H1 (cell line): ENCODE measurements at regions of chr12 and their contacts with region 1.

Region 1: DNA sequence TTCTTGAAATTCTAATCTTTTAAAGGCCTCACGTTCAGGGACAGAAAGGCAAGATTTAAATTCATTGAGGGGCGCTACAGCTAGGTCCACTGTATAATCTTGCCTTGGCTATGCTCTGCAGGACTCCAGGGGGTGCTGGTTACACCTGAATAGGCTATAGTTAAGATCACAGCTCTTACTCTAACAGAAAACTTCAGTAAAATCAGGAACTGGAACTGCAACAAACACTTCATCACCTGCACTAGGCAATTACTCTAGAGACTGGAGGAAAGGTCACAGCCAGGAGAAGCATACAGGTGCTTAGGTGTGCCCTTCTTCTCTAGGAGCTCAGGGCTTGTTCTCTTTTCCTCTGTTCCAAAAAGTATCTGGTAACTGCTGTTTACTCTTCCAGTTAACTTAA is 20.9 kb downstream of the SLCO1C1 start:
- DNase-seq: peak in 1 of 2 experiments; percentile 13
- H3K4me3 ChIP-seq: no peak overlapping the region
- H3K27ac ChIP-seq: no peak overlapping the region
- H3K4me1 ChIP-seq: peaks cover 0 to 4% (median 1%) of the 10 kb centered on the region in 4 experiments; a peak in 2 of 7 replicates
- H3K27me3 ChIP-seq: peaks cover 0 to 1% (median 0%) of the 10 kb centered on the region in 4 experiments; a peak in 1 of 7 replicates
- CTCF ChIP-seq: peak in 2 of 3 experiments; percentile 55 to 64; a peak in 3 of 4 replicates
- EP300 ChIP-seq: no peak
- POLR2A ChIP-seq: no peak
- RAD21 ChIP-seq: peak; percentile 59 to 69

Region 2: GRCh38 chr12:20463913-20464524 is 252.0 kb before region 1 on chr12:
- CTCF ChIA-PET with region 1: no interaction called
- POLR2A ChIA-PET with region 1: no interaction called
- DNase-seq: no peak
- H3K4me3 ChIP-seq: no peak overlapping the region
- H3K27ac ChIP-seq: no peak overlapping the region
- H3K4me1 ChIP-seq: no peaks in the 10 kb centered on the region
- H3K27me3 ChIP-seq: no peaks in the 10 kb centered on the region
- CTCF ChIP-seq: peak in 2 of 3 experiments; percentile 25 to 57; a peak in 2 of 4 replicates
- EP300 ChIP-seq: no peak
- POLR2A ChIP-seq: no peak
- RAD21 ChIP-seq: peak; percentile 29 to 38

Region 3: DNA sequence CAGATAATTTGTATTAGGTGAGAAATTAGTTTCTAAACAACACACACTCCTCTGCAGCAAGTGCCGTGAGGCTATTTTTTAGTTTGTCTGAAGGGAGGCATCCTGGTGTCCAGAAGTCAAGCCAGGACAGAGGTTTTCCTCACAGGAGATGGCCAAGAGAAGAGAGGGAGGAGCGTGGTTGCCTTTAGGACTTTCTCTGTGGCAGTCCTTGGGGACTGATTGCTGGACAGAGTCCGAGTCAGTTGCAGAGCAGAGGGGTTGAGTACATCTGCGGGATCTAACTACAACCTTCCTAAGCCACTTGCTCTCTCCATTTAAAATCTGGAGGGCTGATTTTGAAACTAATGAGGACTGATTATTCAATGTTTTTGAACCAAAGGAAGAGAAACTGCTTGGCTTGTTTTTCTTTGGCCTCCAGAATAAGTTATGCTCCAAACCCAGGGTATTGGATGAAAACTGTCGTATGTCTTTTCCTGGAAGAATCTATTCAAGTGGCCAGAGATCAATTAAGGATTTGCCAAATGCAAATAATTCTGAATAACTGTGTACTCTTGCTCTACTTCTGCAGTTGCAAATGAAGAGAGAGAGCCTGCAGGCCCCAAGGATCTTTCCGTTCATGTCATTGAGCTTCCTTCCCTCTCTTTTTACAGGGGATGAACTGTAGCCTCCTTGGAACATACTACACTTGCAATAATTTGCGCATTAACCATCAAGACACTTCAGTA is 19.7 kb before region 1 on chr12:
- CTCF ChIA-PET with region 1: interaction called, 11 read pairs
- POLR2A ChIA-PET with region 1: no interaction called
- DNase-seq: no peak
- H3K4me3 ChIP-seq: no peak overlapping the region
- H3K27ac ChIP-seq: no peak overlapping the region
- H3K4me1 ChIP-seq: peaks cover 0 to 4% (median 4%) of the 10 kb centered on the region in 4 experiments; a peak in 4 of 7 replicates
- H3K27me3 ChIP-seq: no peaks in the 10 kb centered on the region
- CTCF ChIP-seq: no peak
- EP300 ChIP-seq: no peak
- POLR2A ChIP-seq: no peak
- RAD21 ChIP-seq: no peak

Region 4: GRCh38 chr12:20704860-20705259 is 11.2 kb before region 1 on chr12:
- CTCF ChIA-PET with region 1: interaction called, 27 read pairs
- POLR2A ChIA-PET with region 1: no interaction called
- DNase-seq: no peak
- H3K4me3 ChIP-seq: no peak overlapping the region
- H3K27ac ChIP-seq: no peak overlapping the region
- H3K4me1 ChIP-seq: no peaks in the 10 kb centered on the region
- H3K27me3 ChIP-seq: no peaks in the 10 kb centered on the region
- CTCF ChIP-seq: no peak
- EP300 ChIP-seq: no peak
- POLR2A ChIP-seq: no peak
- RAD21 ChIP-seq: no peak

Region 5: DNA sequence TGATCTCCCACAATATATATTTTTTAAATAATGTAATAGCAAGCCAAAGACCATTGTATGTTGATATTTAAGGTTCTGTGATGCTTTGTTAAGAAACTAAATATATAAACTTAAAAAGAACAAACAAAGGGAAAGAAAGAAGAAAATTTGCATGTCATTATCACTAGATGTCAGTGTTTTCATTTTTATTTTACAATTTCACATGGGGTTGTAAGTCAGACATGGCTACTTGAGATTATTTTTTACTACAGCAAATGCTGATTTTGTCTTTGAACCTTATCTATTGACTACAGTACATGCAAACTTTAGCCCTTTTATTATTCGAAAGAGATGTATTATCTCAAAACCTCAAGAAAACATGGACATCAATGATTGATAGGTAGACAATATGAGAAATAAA is 15.2 kb after region 1 on chr12:
- CTCF ChIA-PET with region 1: interaction called, 11 read pairs
- POLR2A ChIA-PET with region 1: no interaction called
- DNase-seq: no peak
- H3K4me3 ChIP-seq: no peak overlapping the region
- H3K27ac ChIP-seq: no peak overlapping the region
- H3K4me1 ChIP-seq: no peaks in the 10 kb centered on the region
- H3K27me3 ChIP-seq: no peaks in the 10 kb centered on the region
- CTCF ChIP-seq: no peak
- EP300 ChIP-seq: no peak
- POLR2A ChIP-seq: no peak
- RAD21 ChIP-seq: no peak

Region 6: DNA sequence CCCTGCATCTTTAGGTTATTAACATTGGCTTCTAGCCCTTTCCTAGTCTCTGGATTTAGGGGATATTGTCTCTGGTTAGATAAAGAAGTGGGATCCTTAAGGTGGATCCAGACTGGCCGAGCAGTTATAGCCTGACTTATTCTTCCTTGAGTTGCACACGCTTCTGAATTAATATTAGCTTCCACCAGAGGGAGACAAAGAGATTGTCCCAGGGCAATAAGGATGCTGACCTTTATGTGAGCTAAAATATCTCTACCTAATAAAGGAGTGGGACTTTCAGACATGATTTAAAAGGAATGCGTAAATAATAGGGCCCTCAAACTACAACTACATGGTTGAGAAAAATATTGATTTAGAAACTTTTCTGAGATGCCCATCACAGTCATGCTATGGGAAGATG is 234.2 kb after region 1 on chr12:
- CTCF ChIA-PET with region 1: interaction called, 20 read pairs
- POLR2A ChIA-PET with region 1: no interaction called
- DNase-seq: no peak
- H3K4me3 ChIP-seq: no peak overlapping the region
- H3K27ac ChIP-seq: no peak overlapping the region
- H3K4me1 ChIP-seq: no peaks in the 10 kb centered on the region
- H3K27me3 ChIP-seq: no peaks in the 10 kb centered on the region
- CTCF ChIP-seq: peak in 2 of 3 experiments; percentile 45 to 54; a peak in 3 of 4 replicates
- EP300 ChIP-seq: no peak
- POLR2A ChIP-seq: no peak
- RAD21 ChIP-seq: peak; percentile 51 to 55